ENCODE measurements at regions of chr16 and their contacts with region 1.

Region 1: GRCh38 chr16:56608043-56608875 is at the start of gene MT2A:
- DNase-seq: peak; percentile 95 to 98 (median 97)
- H3K4me3 ChIP-seq: peak within 1 kb of the TSS; percentile 36 to 87 (median 54)
- H3K27ac ChIP-seq: peak within 1 kb of the TSS; percentile 90 to 100 (median 99)
- H3K4me1 ChIP-seq: peaks cover 49 to 55% of the 10 kb centered on the region in 2 donors
- H3K27me3 ChIP-seq: no peaks in the 10 kb centered on the region
- CTCF ChIP-seq: no peak
- POLR2A ChIP-seq: peak; percentile 97 to 100
- total RNA-seq, gene MT2A: 43.8 to 6,828 (median 396) TPM

Region 2: DNA sequence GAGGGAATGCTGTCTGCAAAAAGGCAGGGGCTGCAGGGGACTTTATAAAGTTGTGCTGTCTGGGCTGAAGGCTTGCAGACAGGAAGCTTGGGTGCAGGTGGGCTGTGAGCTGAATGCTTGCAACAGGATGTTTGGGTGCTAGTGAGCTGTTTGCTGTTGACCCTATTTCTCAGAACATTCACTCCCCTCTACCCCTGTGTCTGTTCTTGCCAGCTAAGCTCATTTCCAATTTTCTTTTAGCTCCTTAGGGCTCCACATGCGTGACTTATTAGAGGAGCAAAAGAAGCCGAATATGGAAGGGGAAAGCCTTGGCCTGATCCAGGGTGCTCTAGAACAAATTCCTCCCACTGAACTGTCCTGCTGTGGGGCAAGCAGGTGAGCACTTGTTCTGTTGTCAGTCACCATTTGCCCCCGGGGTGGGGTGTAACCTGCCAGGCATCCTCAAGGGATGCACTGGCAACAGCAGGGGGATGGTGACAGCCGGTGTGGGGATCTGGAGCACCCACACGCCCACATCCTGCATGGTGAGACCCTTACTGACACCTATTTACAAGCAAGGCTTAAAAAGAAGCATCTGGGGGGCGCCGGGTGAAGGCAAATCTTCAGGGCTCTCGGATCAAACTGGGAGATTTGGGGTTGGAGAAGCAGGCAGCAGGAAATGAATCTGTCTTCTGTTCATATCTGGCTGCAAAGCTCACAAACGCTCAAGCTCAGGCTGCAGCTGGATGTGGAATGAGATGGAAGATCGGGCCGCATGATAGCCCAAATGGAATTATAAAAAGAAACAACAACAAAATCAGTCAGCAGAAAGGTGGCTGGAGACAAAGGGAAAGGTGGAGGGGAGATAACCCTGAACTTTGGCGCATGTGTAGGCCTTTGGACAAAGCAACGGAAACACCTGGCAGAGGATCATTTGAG is 100.5 kb after region 1 on chr16:
- intact Hi-C with region 1: loop called (anchors 5 to 10 kb)
- DNase-seq: no peak
- H3K4me3 ChIP-seq: no peak overlapping the region
- H3K27ac ChIP-seq: no peak overlapping the region
- H3K4me1 ChIP-seq: no peaks in the 10 kb centered on the region
- H3K27me3 ChIP-seq: no peaks in the 10 kb centered on the region
- CTCF ChIP-seq: no peak
- POLR2A ChIP-seq: no peak